Transverse colon (tissue), 4 donors: ENCODE measurements at regions of chr3 and their contacts with region 1.

Region 1: GRCh38 chr3:63911873-63912767 is at the start of gene SCAANT1:
- DNase-seq: peak; percentile 92
- H3K4me3 ChIP-seq: peak within 1 kb of the TSS; percentile 62 to 81 (median 72)
- H3K27ac ChIP-seq: peak within 1 kb of the TSS; percentile 96 to 99 (median 98)
- H3K4me1 ChIP-seq: peaks cover 6 to 41% (median 28%) of the 10 kb centered on the region in 4 donors
- H3K27me3 ChIP-seq: no peaks in the 10 kb centered on the region
- CTCF ChIP-seq: peak in 3 of 5 experiments; percentile 7 to 51 (median 46)
- EP300 ChIP-seq: peak; percentile 15
- POLR2A ChIP-seq: peak; percentile 73
- total RNA-seq, gene SCAANT1: not detected

Region 2: DNA sequence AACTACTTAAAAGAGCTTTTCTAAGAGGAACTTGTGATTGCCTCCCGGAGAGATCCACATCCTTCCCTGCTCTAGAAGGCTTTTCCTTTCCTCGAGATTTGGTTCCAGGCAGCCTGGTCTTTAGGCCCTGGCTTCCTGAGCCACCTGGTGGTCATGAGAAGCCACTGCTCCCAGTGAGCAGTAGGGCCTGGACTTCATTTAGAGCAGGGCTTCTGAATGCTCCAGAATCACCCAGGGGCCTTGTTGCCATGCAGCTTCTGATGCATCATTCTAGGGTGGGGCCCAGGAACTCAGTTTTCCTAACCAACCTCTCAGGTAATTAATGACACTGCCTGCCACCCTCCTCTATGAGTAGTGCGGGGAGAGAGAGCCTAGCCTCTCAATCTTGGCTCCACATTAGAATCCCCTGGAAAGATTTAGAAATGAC is 81.5 kb after region 1 on chr3:
- in situ Hi-C with region 1: no loop called
- intact Hi-C with region 1: loop called (anchors 10 kb)
- DNase-seq: peak; percentile 68
- H3K4me3 ChIP-seq: no peak overlapping the region
- H3K27ac ChIP-seq: no peak overlapping the region
- H3K4me1 ChIP-seq: peaks cover 0 to 7% (median 1%) of the 10 kb centered on the region in 4 donors
- H3K27me3 ChIP-seq: no peaks in the 10 kb centered on the region
- CTCF ChIP-seq: peak; percentile 91 to 94 (median 93)
- EP300 ChIP-seq: no peak
- POLR2A ChIP-seq: no peak

Region 3: DNA sequence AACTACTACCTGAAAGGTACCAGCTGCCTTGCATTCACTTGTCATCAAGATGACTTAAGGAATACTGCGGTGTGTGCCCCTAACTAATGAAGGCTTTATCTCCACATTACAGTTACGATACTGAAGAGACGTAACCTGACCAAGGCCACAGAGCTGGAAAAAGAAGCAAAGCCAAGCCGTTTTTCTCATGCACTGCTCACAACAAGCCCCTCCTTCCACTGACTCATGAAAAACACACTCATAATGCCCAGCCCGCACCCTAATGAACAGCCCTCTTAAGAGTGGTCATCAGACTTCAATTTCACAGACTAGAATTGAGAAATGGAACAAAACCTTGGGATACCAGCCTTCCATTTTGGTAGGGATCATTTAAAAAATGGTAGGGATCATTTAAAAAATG is 99.6 kb after region 1 on chr3:
- in situ Hi-C with region 1: no loop called
- intact Hi-C with region 1: no loop called
- DNase-seq: no peak
- H3K4me3 ChIP-seq: no peak overlapping the region
- H3K27ac ChIP-seq: no peak overlapping the region
- H3K4me1 ChIP-seq: no peaks in the 10 kb centered on the region
- H3K27me3 ChIP-seq: no peaks in the 10 kb centered on the region
- CTCF ChIP-seq: no peak
- EP300 ChIP-seq: no peak
- POLR2A ChIP-seq: no peak

Region 4: GRCh38 chr3:65006300-65006739 is 1094.2 kb after region 1 on chr3:
- in situ Hi-C with region 1: no loop called
- intact Hi-C with region 1: no loop called
- DNase-seq: no peak
- H3K4me3 ChIP-seq: no peak overlapping the region
- H3K27ac ChIP-seq: no peak overlapping the region
- H3K4me1 ChIP-seq: no peaks in the 10 kb centered on the region
- H3K27me3 ChIP-seq: no peaks in the 10 kb centered on the region
- CTCF ChIP-seq: no peak
- EP300 ChIP-seq: no peak
- POLR2A ChIP-seq: no peak